WTC11 (cell line): ENCODE measurements at regions of chr19 and their contacts with region 1.

Region 1: GRCh38 chr19:57819475-57820148 is 4.9 kb upstream of the ZNF552 start:
- DNase-seq: peak; percentile 78
- ATAC-seq: peak; percentile 79
- H3K4me3 Mint-ChIP-seq: peak overlapping the region; percentile 97
- H3K27ac Mint-ChIP-seq: peak overlapping the region; percentile 96
- H3K4me1 Mint-ChIP-seq: peaks cover 60% of the 10 kb centered on the region
- H3K27me3 Mint-ChIP-seq: no peaks in the 10 kb centered on the region
- CTCF ChIP-seq: no peak

Region 2: GRCh38 chr19:57803594-57804325 is 15.9 kb before region 1 on chr19:
- CTCF ChIA-PET with region 1: interaction called, 12 read pairs
- POLR2A ChIA-PET with region 1: interaction called, 11 read pairs
- DNase-seq: peak; percentile 69
- ATAC-seq: peak; percentile 60
- H3K4me3 Mint-ChIP-seq: peak overlapping the region; percentile 86
- H3K27ac Mint-ChIP-seq: peak overlapping the region; percentile 100
- H3K4me1 Mint-ChIP-seq: peaks cover 70% of the 10 kb centered on the region
- H3K27me3 Mint-ChIP-seq: no peaks in the 10 kb centered on the region
- CTCF ChIP-seq: no peak

Region 3: DNA sequence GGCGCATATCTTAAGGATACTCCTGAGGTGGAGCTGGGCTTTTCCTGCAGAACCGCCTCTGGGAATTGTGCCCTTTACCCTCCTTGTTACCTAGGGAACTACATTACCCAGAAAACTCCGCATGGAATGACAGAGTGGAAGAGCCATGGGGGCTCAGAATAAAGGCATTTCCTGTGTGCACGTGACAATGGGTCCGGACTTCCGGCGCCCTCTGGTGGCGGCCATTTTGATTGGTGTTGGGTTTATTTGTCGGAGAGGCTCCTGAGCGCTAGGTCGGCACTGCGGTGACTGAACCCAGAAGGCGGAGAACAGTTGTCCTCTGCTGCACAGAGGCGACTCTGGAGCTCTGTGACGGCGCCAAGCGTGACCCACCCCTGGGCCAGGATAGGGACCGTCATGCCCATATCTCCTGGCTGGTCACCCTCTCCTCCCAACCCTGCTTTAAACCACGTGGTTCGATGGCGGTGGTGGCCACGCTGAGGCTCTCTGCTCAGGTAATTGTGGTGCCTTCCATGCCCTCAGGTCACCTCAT is 10.5 kb after region 1 on chr19 and contains the start of gene ZNF587B:
- CTCF ChIA-PET with region 1: interaction called, 10 read pairs
- POLR2A ChIA-PET with region 1: interaction called, 10 read pairs
- DNase-seq: peak; percentile 94
- ATAC-seq: peak; percentile 99
- H3K4me3 Mint-ChIP-seq: peak within 1 kb of the TSS; percentile 98
- H3K27ac Mint-ChIP-seq: peak within 1 kb of the TSS; percentile 98
- H3K4me1 Mint-ChIP-seq: peaks cover 22% of the 10 kb centered on the region
- H3K27me3 Mint-ChIP-seq: no peaks in the 10 kb centered on the region
- CTCF ChIP-seq: peak; percentile 56
- total RNA-seq, gene ZNF587B: 39.9 to 43.2 TPM (median 41.7 TPM) in 3 replicates

Region 4: DNA sequence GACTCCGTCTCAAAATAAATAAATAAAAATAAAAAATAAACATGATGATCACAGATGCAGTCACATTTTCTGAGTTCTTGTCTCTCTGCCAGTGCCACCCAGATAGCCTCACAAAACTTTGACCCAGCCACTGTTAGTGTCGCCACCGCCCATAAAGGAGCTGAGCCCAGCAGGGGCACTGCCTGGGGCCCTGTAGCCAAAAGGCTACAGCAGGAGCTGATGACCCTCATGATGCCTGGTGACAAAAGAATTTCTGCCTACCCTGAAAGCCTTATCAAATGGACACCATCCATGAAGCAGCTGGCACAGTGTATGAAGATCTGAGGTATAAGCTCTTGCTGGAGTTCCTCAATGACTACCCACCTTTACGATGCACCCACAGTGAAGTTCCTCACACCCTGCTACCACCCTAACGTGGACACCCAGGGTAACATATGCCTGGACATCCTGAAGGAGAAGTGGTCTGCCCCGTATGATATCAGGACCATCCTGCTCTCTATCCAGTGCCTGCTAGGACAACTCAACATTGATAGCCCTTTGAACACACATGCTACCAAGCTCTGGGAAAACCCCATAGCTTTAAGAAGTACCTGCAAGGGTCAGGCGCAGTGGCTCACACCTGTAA is 48.4 kb after region 1 on chr19:
- CTCF ChIA-PET with region 1: no interaction called
- POLR2A ChIA-PET with region 1: no interaction called
- DNase-seq: no peak
- ATAC-seq: no peak
- H3K4me3 Mint-ChIP-seq: no peak overlapping the region
- H3K27ac Mint-ChIP-seq: peak overlapping the region; percentile 49
- H3K4me1 Mint-ChIP-seq: no peaks in the 10 kb centered on the region
- H3K27me3 Mint-ChIP-seq: no peaks in the 10 kb centered on the region
- CTCF ChIP-seq: no peak